Activated CD8-positive, alpha-beta T cell treated with anti-CD3 and anti-CD28 coated beads, Interleukin-2, amount 10 ng/mL, durations not matched to agents 7 days and 5 days (primary cell): ENCODE measurements at regions of chr21 and their contacts with region 1.

Region 1: GRCh38 chr21:45087022-45087823 is 12.8 kb downstream of the ADARB1 start:
- DNase-seq: peak; percentile 72
- ATAC-seq: peak; percentile 59
- H3K4me3 Mint-ChIP-seq: peak overlapping the region; percentile 44
- H3K27ac Mint-ChIP-seq: peak overlapping the region; percentile 78
- H3K4me1 Mint-ChIP-seq: peaks cover 86% of the 10 kb centered on the region
- H3K27me3 Mint-ChIP-seq: no peaks in the 10 kb centered on the region

Region 2: GRCh38 chr21:44880762-44881585 is 206.2 kb before region 1 on chr21:
- CTCF ChIA-PET with region 1: no interaction called
- POLR2A ChIA-PET with region 1: no interaction called
- DNase-seq: no peak
- ATAC-seq: peak; percentile 46
- H3K4me3 Mint-ChIP-seq: peak overlapping the region; percentile 12
- H3K27ac Mint-ChIP-seq: peak overlapping the region; percentile 80
- H3K4me1 Mint-ChIP-seq: peaks cover 33% of the 10 kb centered on the region
- H3K27me3 Mint-ChIP-seq: no peaks in the 10 kb centered on the region

Region 3: GRCh38 chr21:45105906-45106485 is 18.8 kb after region 1 on chr21:
- CTCF ChIA-PET with region 1: interaction called, 12 read pairs
- POLR2A ChIA-PET with region 1: no interaction called
- DNase-seq: no peak
- ATAC-seq: no peak
- H3K4me3 Mint-ChIP-seq: no peak overlapping the region
- H3K27ac Mint-ChIP-seq: no peak overlapping the region
- H3K4me1 Mint-ChIP-seq: peaks cover 83% of the 10 kb centered on the region
- H3K27me3 Mint-ChIP-seq: no peaks in the 10 kb centered on the region

Region 4: GRCh38 chr21:45122432-45123132 is 35.4 kb after region 1 on chr21:
- CTCF ChIA-PET with region 1: no interaction called
- POLR2A ChIA-PET with region 1: no interaction called
- DNase-seq: no peak
- ATAC-seq: no peak
- H3K4me3 Mint-ChIP-seq: no peak overlapping the region
- H3K27ac Mint-ChIP-seq: peak overlapping the region; percentile 53
- H3K4me1 Mint-ChIP-seq: peaks cover 13% of the 10 kb centered on the region
- H3K27me3 Mint-ChIP-seq: no peaks in the 10 kb centered on the region

Region 5: GRCh38 chr21:45357436-45358260 is 270.4 kb after region 1 on chr21:
- CTCF ChIA-PET with region 1: no interaction called
- POLR2A ChIA-PET with region 1: no interaction called
- DNase-seq: no peak
- ATAC-seq: no peak
- H3K4me3 Mint-ChIP-seq: no peak overlapping the region
- H3K27ac Mint-ChIP-seq: no peak overlapping the region
- H3K4me1 Mint-ChIP-seq: no peaks in the 10 kb centered on the region
- H3K27me3 Mint-ChIP-seq: peaks cover 27% of the 10 kb centered on the region